Activated naive CD4-positive, alpha-beta T cell treated with anti-CD3 and anti-CD28 coated beads for 36 hours (primary cell): ENCODE measurements at regions of chr22 and their contacts with region 1.

Region 1: DNA sequence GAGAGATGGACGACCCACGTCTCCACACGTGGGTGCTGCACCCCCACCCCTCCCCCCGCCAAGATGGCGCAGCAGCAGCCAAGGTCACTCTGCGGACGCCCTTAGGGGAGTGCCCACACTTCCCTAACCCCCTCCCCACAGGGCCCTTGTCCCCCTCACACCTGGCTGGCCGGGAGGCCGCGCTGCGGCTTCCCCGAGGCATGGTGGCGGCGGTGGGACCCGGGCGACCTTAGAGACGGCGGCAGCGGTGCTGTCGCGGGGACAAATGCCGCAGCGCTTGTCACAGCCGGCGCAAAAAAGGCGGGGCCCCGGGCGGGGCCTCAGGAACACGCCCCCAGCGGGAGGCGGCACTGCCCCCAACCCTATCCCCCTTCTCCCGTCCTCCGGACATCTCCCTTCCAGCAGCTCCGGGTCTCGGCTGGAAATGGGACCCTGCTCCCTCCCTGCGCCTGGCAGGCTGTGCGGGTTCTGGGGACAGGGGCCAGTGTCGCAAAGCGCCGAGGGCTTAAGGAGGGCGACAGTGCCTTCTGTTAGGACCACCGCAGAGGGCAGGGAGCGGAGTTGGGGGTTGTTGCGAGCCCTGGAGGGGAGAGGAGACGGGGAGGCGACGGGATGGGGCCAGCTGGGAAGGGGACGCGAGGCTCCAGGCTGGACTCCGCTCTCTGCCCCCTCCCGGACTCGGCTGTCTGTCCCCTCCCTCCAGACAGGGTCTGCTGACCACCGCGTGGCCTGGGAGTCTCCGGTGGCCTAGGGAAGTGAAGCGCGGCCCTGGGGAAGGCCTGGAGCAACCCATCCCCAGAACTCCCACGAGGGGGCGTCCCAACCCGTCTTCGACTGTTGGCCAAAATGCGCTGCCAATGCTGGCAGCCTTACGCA is at the start of gene CHCHD10:
- DNase-seq: peak; percentile 79
- H3K4me3 Mint-ChIP-seq: peak within 1 kb of the TSS; percentile 77
- H3K27ac Mint-ChIP-seq: peak within 1 kb of the TSS; percentile 59
- H3K4me1 Mint-ChIP-seq: peaks cover 43% of the 10 kb centered on the region
- H3K27me3 Mint-ChIP-seq: no peaks in the 10 kb centered on the region
- total RNA-seq, gene CHCHD10: 190 to 191 TPM

Region 2: DNA sequence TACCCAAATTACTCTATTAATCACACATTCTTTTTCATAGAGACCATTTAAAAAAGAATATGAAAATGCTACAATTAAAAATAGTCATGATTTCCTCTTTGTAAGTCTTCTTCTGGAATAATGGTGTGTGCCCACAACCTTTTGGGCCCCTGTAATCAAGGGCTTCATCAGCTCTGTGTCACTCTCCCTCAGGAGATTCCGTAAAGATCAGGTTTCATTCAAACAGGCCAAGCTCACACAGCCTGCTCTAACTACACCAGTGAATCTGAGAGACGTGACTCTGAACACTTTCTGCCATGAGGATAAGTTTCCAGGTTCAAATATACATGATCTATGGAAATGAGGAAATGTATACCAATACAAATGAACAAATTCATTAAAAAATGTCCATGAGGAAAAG is 145.3 kb before region 1 on chr22:
- CTCF ChIA-PET with region 1: no interaction called
- intact Hi-C with region 1: loop called (anchors 1 kb)
- DNase-seq: no peak
- H3K4me3 Mint-ChIP-seq: no peak overlapping the region
- H3K27ac Mint-ChIP-seq: no peak overlapping the region
- H3K4me1 Mint-ChIP-seq: no peaks in the 10 kb centered on the region
- H3K27me3 Mint-ChIP-seq: no peaks in the 10 kb centered on the region

Region 3: DNA sequence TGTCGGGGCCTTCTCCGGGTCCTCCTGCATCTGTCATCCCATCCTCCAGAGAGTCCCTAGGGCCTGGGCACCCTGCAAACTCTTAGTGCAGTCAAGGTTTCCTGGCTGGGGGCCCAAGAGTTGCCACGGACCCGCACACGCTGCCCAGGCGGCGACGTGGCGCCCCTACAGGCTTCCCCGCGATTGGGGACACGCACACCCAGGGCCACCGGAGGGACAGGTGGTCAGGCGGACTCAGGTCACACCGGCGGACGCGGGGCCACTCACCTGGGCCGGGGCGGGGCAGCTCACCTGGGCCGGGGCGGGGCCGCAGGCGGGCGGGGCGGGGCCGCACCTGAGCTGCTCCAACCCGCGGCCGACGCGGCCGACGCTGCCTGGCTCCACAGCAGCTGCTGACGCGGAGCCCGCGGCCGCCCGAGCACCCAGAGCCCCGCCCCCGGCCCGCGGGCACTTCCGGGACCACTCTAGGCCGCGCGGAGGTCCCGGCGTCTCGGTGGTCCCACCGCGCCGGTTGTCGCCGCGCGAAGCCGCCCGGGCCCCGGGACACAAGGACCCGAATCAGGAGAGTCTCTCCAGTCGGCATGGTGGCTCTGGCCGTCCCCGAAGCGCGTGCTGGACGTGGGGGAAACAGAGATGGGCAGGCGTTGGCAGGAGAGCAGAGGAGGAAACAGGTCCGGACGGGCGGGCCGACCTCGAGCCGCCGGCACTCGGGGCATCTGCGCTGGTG is 17.0 kb before region 1 on chr22 and contains the start of gene ZNF70:
- CTCF ChIA-PET with region 1: interaction called, 7 read pairs
- intact Hi-C with region 1: loop called (anchors 2 kb)
- DNase-seq: peak; percentile 81
- H3K4me3 Mint-ChIP-seq: peak within 1 kb of the TSS; percentile 75
- H3K27ac Mint-ChIP-seq: no peak within 1 kb of the TSS
- H3K4me1 Mint-ChIP-seq: peaks cover 11% of the 10 kb centered on the region
- H3K27me3 Mint-ChIP-seq: no peaks in the 10 kb centered on the region
- total RNA-seq, gene ZNF70: 0.79 to 0.93 TPM

Region 4: GRCh38 chr22:23838681-23839468 is 71.0 kb after region 1 on chr22 and contains the start of gene DERL3:
- CTCF ChIA-PET with region 1: no interaction called
- intact Hi-C with region 1: loop called (anchors 1 kb)
- DNase-seq: peak; percentile 97
- H3K4me3 Mint-ChIP-seq: peak within 1 kb of the TSS; percentile 84
- H3K27ac Mint-ChIP-seq: peak within 1 kb of the TSS; percentile 37
- H3K4me1 Mint-ChIP-seq: peaks cover 16% of the 10 kb centered on the region
- H3K27me3 Mint-ChIP-seq: peaks cover 3% of the 10 kb centered on the region
- total RNA-seq, gene DERL3: 7.3 to 7.5 TPM